ENCODE measurements at regions of chr6 and their contacts with region 1.

Region 1: GRCh38 chr6:109482905-109483735 is at the start of gene ZBTB24:
- DNase-seq: peak; percentile 75 to 96 (median 88)
- ATAC-seq: peak; percentile 85
- H3K4me3 ChIP-seq: peak within 1 kb of the TSS; percentile 65 to 69
- H3K4me3 Mint-ChIP-seq: peak within 1 kb of the TSS; percentile 95
- H3K27ac ChIP-seq: peak within 1 kb of the TSS; percentile 49 to 62
- H3K27ac Mint-ChIP-seq: peak within 1 kb of the TSS; percentile 89
- H3K4me1 ChIP-seq: peaks cover 37% of the 10 kb centered on the region
- H3K4me1 Mint-ChIP-seq: peaks cover 50% of the 10 kb centered on the region
- H3K27me3 ChIP-seq: no peaks in the 10 kb centered on the region
- H3K27me3 Mint-ChIP-seq: no peaks in the 10 kb centered on the region
- CTCF ChIP-seq: no peak
- total RNA-seq, gene ZBTB24: 10.9 to 11.2 TPM

Region 2: GRCh38 chr6:109440331-109441068 is 42.6 kb before region 1 on chr6 and contains the starts of genes PPIL6 and SMPD2:
- CTCF ChIA-PET with region 1: interaction called, 7 read pairs
- POLR2A ChIA-PET with region 1: interaction called, 4 read pairs
- intact Hi-C with region 1: loop called (anchors 1 kb)
- DNase-seq: peak; percentile 61 to 92 (median 75)
- ATAC-seq: peak; percentile 79
- H3K4me3 ChIP-seq: peak within 1 kb of the TSS; percentile 68 to 92
- H3K4me3 Mint-ChIP-seq: peak within 1 kb of the TSS; percentile 89
- H3K27ac ChIP-seq: peak within 1 kb of the TSS; percentile 69 to 83
- H3K27ac Mint-ChIP-seq: peak within 1 kb of the TSS; percentile 93
- H3K4me1 ChIP-seq: peaks cover 26% of the 10 kb centered on the region
- H3K4me1 Mint-ChIP-seq: peaks cover 35% of the 10 kb centered on the region
- H3K27me3 ChIP-seq: no peaks in the 10 kb centered on the region
- H3K27me3 Mint-ChIP-seq: no peaks in the 10 kb centered on the region
- CTCF ChIP-seq: peak; percentile 31
- total RNA-seq, gene PPIL6: 1.3 to 1.4 TPM
- total RNA-seq, gene SMPD2: 22.8 to 23.9 TPM

Region 3: DNA sequence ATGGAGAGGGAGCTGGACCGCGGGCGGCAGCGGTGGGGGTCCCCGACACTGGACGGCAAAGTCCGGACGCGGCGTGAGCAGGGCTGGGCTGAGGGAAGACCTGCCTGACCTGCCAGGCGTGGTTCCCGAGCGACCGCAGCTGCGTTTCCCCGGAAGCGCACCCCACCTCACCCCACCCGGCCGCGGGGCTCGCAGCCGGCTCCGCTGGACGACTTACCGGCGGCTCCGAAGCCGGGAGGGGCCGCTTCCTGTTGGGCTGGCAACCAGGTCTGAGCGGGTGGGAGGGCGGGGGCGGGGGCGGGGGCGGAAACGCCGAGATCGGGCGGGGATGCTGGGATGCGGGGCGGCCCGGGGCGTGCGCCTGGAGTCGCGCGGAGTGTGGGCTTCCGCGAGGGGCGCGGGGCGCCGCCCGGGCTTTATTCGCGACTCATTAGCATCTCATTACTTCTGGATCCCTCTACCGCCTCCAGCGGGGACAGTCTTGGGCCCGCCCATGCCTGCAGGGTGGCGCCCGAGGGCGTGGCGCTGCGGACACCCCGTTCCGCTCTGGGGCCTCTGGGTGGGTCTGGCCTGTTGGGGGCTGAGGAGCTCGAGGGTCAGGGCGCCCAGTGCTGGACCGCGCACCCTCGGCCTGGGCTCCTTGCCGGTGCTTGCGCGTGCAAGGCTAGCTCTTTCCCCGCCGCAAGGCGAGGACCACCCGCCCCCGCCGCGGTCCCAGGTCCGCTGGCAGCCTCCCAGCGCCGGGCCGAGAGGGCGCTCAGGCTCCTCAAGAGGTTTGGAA is 27.4 kb before region 1 on chr6 and contains the start of gene MICAL1:
- CTCF ChIA-PET with region 1: interaction called, 4 read pairs
- POLR2A ChIA-PET with region 1: interaction called, 55 read pairs
- intact Hi-C with region 1: loop called (anchors 1 kb)
- DNase-seq: peak; percentile 53 to 91 (median 77)
- ATAC-seq: peak; percentile 58
- H3K4me3 ChIP-seq: peak within 1 kb of the TSS; percentile 93 to 99
- H3K4me3 Mint-ChIP-seq: peak within 1 kb of the TSS; percentile 97
- H3K27ac ChIP-seq: peak within 1 kb of the TSS; percentile 89 to 98
- H3K27ac Mint-ChIP-seq: peak within 1 kb of the TSS; percentile 98
- H3K4me1 ChIP-seq: peaks cover 55% of the 10 kb centered on the region
- H3K4me1 Mint-ChIP-seq: peaks cover 65% of the 10 kb centered on the region
- H3K27me3 ChIP-seq: no peaks in the 10 kb centered on the region
- H3K27me3 Mint-ChIP-seq: no peaks in the 10 kb centered on the region
- CTCF ChIP-seq: no peak
- total RNA-seq, gene MICAL1: 68.0 to 76.4 TPM

Region 4: GRCh38 chr6:109465772-109466171 is 17.3 kb before region 1 on chr6:
- CTCF ChIA-PET with region 1: interaction called, 5 read pairs
- POLR2A ChIA-PET with region 1: interaction called, 55 read pairs
- intact Hi-C with region 1: loop called in 1 of 2 experiments (anchors 2 kb)
- DNase-seq: no peak
- ATAC-seq: no peak
- H3K4me3 ChIP-seq: no peak overlapping the region
- H3K4me3 Mint-ChIP-seq: no peak overlapping the region
- H3K27ac ChIP-seq: no peak overlapping the region
- H3K27ac Mint-ChIP-seq: peak overlapping the region; percentile 61
- H3K4me1 ChIP-seq: peaks cover 8% of the 10 kb centered on the region
- H3K4me1 Mint-ChIP-seq: peaks cover 53% of the 10 kb centered on the region
- H3K27me3 ChIP-seq: no peaks in the 10 kb centered on the region
- H3K27me3 Mint-ChIP-seq: no peaks in the 10 kb centered on the region
- CTCF ChIP-seq: no peak

Region 5: DNA sequence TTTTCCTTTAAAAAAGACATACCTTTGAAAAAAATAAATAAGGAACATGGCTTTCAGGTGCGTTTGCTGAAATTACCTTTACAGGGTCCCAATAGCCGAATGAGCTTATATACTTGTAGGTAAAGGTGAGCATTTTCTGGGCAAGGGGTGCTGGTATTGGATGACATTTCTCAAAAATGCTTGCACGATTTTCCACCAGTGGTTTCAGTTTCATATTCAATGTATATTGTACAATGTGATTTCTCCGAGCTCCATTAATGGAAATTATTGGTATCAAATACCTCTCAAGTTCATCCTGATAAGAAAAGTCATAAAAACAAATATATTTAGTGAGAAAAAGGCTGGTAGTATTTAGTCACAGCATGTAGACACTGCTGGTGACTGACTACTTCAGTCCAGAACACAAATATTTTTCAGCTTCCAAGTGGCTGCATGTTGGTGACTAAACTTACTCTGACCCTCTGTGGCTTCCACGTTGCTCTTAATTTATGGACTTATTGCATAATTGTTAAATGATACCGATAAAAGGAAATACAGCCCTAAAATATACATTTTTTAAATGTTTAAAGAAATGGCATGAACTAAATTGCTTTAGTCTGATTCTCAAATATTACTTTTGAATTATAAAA is 32.8 kb after region 1 on chr6:
- CTCF ChIA-PET with region 1: no interaction called
- POLR2A ChIA-PET with region 1: no interaction called
- intact Hi-C with region 1: loop called in 1 of 2 experiments (anchors 5 kb)
- DNase-seq: peak in 2 of 9 experiments; percentile 22 to 37
- ATAC-seq: peak; percentile 57
- H3K4me3 ChIP-seq: peak overlapping the region; percentile 13 to 19
- H3K4me3 Mint-ChIP-seq: peak overlapping the region; percentile 71
- H3K27ac ChIP-seq: no peak overlapping the region
- H3K27ac Mint-ChIP-seq: no peak overlapping the region
- H3K4me1 ChIP-seq: peaks cover 26% of the 10 kb centered on the region
- H3K4me1 Mint-ChIP-seq: peaks cover 30% of the 10 kb centered on the region
- H3K27me3 ChIP-seq: no peaks in the 10 kb centered on the region
- H3K27me3 Mint-ChIP-seq: no peaks in the 10 kb centered on the region
- CTCF ChIP-seq: no peak

Measured in CD8-positive, alpha-beta T cell (primary cell).